Heart right ventricle (tissue), 16 donors: ENCODE measurements at regions of chr2 and their contacts with region 1.

Region 1: GRCh38 chr2:20333738-20334137 is 16.9 kb downstream of the PUM2 start:
- DNase-seq: no peak
- ATAC-seq: peak in 1 of 8 donors; percentile 28
- H3K4me3 ChIP-seq: no peak overlapping the region
- H3K27ac ChIP-seq: no peak overlapping the region
- H3K4me1 ChIP-seq: peaks cover 0 to 59% (median 43%) of the 10 kb centered on the region in 9 donors
- H3K27me3 ChIP-seq: no peaks in the 10 kb centered on the region
- CTCF ChIP-seq: no peak

Region 2: GRCh38 chr2:19989681-19990415 is 343.9 kb before region 1 on chr2 and contains the start of gene WDR35:
- intact Hi-C with region 1: loop called in 1 of 10 experiments (anchors 5 kb)
- DNase-seq: peak; percentile 83 to 93
- ATAC-seq: peak; percentile 96 to 100 (median 99)
- H3K4me3 ChIP-seq: peak within 1 kb of the TSS; percentile 58 to 89 (median 78)
- H3K27ac ChIP-seq: peak within 1 kb of the TSS in 8 of 10 donors; percentile 31 to 82 (median 62)
- H3K4me1 ChIP-seq: peaks cover 0 to 26% (median 17%) of the 10 kb centered on the region in 9 donors
- H3K27me3 ChIP-seq: peaks cover 0 to 29% (median 0%) of the 10 kb centered on the region in 7 donors
- CTCF ChIP-seq: no peak
- total RNA-seq, gene WDR35: 4.5 to 8.3 (median 6.0) TPM

Region 3: GRCh38 chr2:20135631-20136050 is 198.1 kb before region 1 on chr2:
- intact Hi-C with region 1: loop called in 1 of 10 experiments (anchors 10 kb)
- DNase-seq: peak; percentile 38 to 56
- ATAC-seq: peak in 5 of 8 donors; percentile 45 to 59 (median 54)
- H3K4me3 ChIP-seq: no peak overlapping the region
- H3K27ac ChIP-seq: no peak overlapping the region
- H3K4me1 ChIP-seq: no peaks in the 10 kb centered on the region
- H3K27me3 ChIP-seq: peaks cover 0 to 14% (median 4%) of the 10 kb centered on the region in 7 donors
- CTCF ChIP-seq: peak; percentile 23 to 72 (median 58)

Region 4: GRCh38 chr2:20391951-20392699 is 58.4 kb after region 1 on chr2:
- intact Hi-C with region 1: loop called in 1 of 10 experiments (anchors 2 kb)
- DNase-seq: no peak
- ATAC-seq: no peak
- H3K4me3 ChIP-seq: no peak overlapping the region
- H3K27ac ChIP-seq: no peak overlapping the region
- H3K4me1 ChIP-seq: no peaks in the 10 kb centered on the region
- H3K27me3 ChIP-seq: peaks cover 0 to 4% (median 0%) of the 10 kb centered on the region in 7 donors
- CTCF ChIP-seq: no peak